ENCODE measurements at regions of chr15 and their contacts with region 1.

Region 1: DNA sequence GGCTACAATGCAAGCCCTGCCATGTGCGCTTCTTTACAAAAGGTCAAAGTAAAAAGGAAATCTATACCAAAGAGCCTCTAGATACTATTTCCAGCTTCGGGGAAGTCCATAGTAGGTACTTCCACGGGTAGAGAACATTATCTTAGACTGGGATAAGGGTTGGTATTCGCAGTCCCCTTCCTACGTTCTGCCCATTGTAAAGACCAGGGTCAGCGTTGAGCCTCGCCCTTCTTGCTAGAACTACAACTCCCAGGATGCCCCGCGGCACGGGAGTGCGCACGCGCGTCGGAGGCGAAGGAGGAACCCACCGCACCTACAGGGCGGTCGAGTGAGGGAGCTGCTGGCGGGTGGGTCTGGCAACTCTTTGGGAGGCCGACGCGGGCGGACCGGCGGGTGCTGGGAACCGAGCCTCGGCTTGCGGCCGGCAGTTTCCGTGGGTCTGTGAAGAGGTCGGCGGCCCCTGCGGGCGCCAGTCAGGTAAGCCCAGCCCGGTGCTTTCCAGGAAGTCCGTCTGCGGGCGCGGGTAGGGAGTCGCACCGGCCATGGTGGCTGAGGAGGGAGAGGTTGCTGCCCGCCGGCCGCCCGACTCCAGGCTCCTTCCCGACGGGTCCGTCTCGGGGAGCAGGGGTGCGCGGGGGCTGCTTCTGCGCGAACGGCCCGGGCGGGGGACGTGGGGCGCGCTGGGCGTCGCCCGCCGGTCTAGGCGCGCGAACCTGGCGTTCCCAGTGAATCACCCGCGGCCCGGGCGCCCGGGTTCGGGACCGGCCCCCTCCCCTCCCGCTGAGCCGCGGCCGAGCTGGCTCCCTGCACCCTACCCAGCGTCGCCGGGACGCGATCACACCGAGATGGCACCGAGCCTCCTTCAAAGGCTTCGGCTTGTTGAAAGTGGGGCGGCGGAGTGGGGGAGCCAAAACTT is at the start of gene TMOD3:
- DNase-seq: peak; percentile 78 to 86
- ATAC-seq: peak; percentile 97 to 98
- H3K4me3 ChIP-seq: peak within 1 kb of the TSS; percentile 82 to 94 (median 85)
- H3K27ac ChIP-seq: peak within 1 kb of the TSS; percentile 87 to 92 (median 90)
- H3K4me1 ChIP-seq: peaks cover 26 to 30% of the 10 kb centered on the region in 2 donors
- H3K27me3 ChIP-seq: no peaks in the 10 kb centered on the region
- CTCF ChIP-seq: peak in 1 of 5 experiments; percentile 16
- POLR2A ChIP-seq: peak; percentile 73 to 86
- total RNA-seq, gene TMOD3: 6.2 to 9.2 (median 6.7) TPM

Region 2: GRCh38 chr15:51561271-51561670 is 268.3 kb before region 1 on chr15:
- in situ Hi-C with region 1: no loop called
- intact Hi-C with region 1: no loop called
- DNase-seq: no peak
- ATAC-seq: no peak
- H3K4me3 ChIP-seq: no peak overlapping the region
- H3K27ac ChIP-seq: no peak overlapping the region
- H3K4me1 ChIP-seq: no peaks in the 10 kb centered on the region
- H3K27me3 ChIP-seq: no peaks in the 10 kb centered on the region
- CTCF ChIP-seq: no peak
- POLR2A ChIP-seq: no peak

Region 3: DNA sequence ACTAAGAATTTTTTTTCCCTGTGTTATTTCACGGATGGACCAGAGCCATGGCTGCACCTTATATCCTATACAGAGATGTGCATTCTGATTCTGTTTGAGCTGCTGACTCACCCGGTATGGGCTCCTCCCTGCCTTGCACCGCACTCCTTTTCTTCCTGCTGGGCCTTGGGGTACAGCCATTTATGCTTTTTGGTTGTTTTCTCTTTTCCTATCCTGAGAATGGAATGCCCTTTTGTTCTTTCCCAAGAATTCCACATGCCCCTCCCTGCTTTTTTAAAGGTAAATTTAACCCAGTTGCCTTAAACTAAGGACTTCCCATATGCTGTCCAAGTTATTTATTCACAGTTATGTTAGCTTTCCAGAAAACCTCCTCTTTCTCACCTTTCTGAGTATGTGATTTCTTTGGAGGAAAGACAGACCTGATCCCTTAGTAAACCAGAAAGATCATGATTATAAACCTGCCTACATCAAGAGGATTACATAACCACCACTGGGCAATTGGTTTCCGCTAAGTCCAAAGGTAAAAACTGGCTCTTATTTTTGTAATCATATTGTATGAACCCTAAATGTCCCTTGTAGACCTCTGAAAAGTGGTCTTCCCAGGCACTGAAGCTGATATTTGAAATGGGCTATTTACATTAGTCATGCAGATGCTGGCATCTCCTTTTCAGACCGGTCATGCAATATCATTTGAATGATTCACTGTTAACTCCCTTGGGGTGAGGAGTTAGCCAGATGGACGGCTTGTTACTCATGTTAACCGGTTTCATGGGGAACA is 45.3 kb after region 1 on chr15:
- in situ Hi-C with region 1: no loop called
- intact Hi-C with region 1: loop called (anchors 5 kb)
- DNase-seq: peak; percentile 23 to 46
- ATAC-seq: peak; percentile 90 to 93
- H3K4me3 ChIP-seq: no peak overlapping the region
- H3K27ac ChIP-seq: peak overlapping the region; percentile 11 to 53 (median 42)
- H3K4me1 ChIP-seq: peaks cover 0 to 15% of the 10 kb centered on the region in 2 donors
- H3K27me3 ChIP-seq: no peaks in the 10 kb centered on the region
- CTCF ChIP-seq: no peak
- POLR2A ChIP-seq: no peak